CD4-positive, alpha-beta memory T cell (primary cell): ENCODE measurements at regions of chr2 and their contacts with region 1.

Region 1: GRCh38 chr2:177383935-177384334 is 8.6 kb upstream of the AGPS start:
- DNase-seq: no peak
- H3K4me3 ChIP-seq: no peak overlapping the region
- H3K4me3 Mint-ChIP-seq: no peak overlapping the region
- H3K27ac ChIP-seq: no peak overlapping the region
- H3K27ac Mint-ChIP-seq: no peak overlapping the region
- H3K4me1 ChIP-seq: no peaks in the 10 kb centered on the region
- H3K4me1 Mint-ChIP-seq: no peaks in the 10 kb centered on the region
- H3K27me3 ChIP-seq: no peaks in the 10 kb centered on the region
- H3K27me3 Mint-ChIP-seq: no peaks in the 10 kb centered on the region

Region 2: GRCh38 chr2:177344316-177344715 is 39.6 kb before region 1 on chr2:
- CTCF ChIA-PET with region 1: no interaction called
- POLR2A ChIA-PET with region 1: no interaction called
- intact Hi-C with region 1: loop called (anchors 2 kb)
- DNase-seq: no peak
- H3K4me3 ChIP-seq: no peak overlapping the region
- H3K4me3 Mint-ChIP-seq: no peak overlapping the region
- H3K27ac ChIP-seq: no peak overlapping the region
- H3K27ac Mint-ChIP-seq: no peak overlapping the region
- H3K4me1 ChIP-seq: no peaks in the 10 kb centered on the region
- H3K4me1 Mint-ChIP-seq: no peaks in the 10 kb centered on the region
- H3K27me3 ChIP-seq: no peaks in the 10 kb centered on the region
- H3K27me3 Mint-ChIP-seq: no peaks in the 10 kb centered on the region

Region 3: DNA sequence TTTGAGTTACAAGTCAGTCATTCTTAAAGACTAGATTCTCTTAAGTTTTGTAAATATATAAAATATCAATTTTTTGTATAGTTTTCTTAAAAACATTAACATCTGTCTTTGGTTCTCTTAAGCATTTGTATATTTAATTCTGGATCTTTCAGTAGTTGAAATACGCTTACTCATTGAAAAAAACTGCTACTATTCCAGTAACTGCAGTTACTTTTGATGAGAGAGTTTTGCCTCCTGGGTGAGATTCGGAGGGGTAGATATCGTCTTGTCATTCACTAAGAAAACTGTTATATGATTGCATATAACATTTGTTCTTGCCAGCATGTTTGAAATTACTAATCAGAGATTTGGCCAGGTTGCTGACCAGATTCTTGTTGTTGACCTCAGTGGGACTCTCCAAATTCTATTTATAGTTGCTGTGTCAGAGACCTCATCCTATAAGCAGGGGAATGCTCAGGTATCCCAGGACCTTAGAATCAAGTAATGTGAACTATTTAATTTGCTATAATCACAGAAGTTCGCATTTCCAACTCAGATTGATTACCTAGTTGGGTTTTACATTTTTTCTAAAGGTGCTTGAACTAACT is 16.5 kb after region 1 on chr2:
- CTCF ChIA-PET with region 1: no interaction called
- POLR2A ChIA-PET with region 1: no interaction called
- intact Hi-C with region 1: no loop called
- DNase-seq: no peak
- H3K4me3 ChIP-seq: no peak overlapping the region
- H3K4me3 Mint-ChIP-seq: no peak overlapping the region
- H3K27ac ChIP-seq: no peak overlapping the region
- H3K27ac Mint-ChIP-seq: no peak overlapping the region
- H3K4me1 ChIP-seq: peaks cover 41% of the 10 kb centered on the region
- H3K4me1 Mint-ChIP-seq: peaks cover 57 to 87% (median 67%) of the 10 kb centered on the region in 4 donors
- H3K27me3 ChIP-seq: no peaks in the 10 kb centered on the region
- H3K27me3 Mint-ChIP-seq: no peaks in the 10 kb centered on the region